Mammary epithelial cell (primary cell): ENCODE measurements at regions of chr6 and their contacts with region 1.

Region 1: DNA sequence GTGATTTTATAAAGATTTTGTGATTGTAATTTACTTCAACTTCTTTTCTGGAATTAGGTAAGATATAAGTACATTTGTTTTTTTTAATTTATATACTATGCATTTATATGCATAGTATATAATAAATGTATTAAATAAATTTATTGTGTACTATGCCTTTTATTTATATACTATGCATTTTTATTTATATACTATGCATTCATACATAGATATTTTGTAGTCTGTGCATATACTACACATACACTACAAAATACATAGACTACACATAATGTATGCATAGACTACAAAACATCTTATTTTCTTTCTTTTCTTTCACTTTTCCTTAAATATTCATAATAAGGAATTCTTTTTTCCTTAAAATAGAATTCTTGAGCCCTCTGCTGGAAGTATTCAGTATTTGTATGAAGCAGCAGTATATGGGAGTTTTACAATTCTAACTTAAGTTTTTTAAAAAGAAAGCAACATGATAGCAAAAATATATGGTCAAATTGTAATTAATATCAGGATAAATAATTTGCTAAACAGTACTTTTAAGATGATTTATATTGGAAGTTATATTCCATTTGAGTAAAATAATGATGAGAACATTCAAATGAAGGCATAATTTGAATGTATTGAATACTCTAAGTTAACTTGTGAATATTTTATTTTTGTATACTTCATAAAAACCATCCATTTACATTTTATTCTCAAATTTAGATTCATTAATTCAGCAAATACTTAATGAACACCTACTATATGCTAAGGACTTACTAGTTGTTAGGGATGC is 129.3 kb downstream of the KLHL32 start:
- DNase-seq: no peak
- H3K4me3 ChIP-seq: no peak overlapping the region
- H3K27ac ChIP-seq: no peak overlapping the region
- H3K4me1 ChIP-seq: peaks cover 7% of the 10 kb centered on the region
- H3K27me3 ChIP-seq: peaks cover 4% of the 10 kb centered on the region
- CTCF ChIP-seq: peak; percentile 38 to 50

Region 2: GRCh38 chr6:96626759-96627364 is 427.0 kb before region 1 on chr6:
- CTCF ChIA-PET with region 1: no interaction called
- dilution Hi-C with region 1: no loop called
- in situ Hi-C with region 1: loop called (anchors 5 kb)
- intact Hi-C with region 1: loop called (anchors 1 kb)
- DNase-seq: peak; percentile 1
- H3K4me3 ChIP-seq: no peak overlapping the region
- H3K27ac ChIP-seq: no peak overlapping the region
- H3K4me1 ChIP-seq: no peaks in the 10 kb centered on the region
- H3K27me3 ChIP-seq: peaks cover 4% of the 10 kb centered on the region
- CTCF ChIP-seq: peak; percentile 7 to 40

Region 3: GRCh38 chr6:96837081-96837971 is 216.5 kb before region 1 on chr6 and contains the start of gene GPR63:
- CTCF ChIA-PET with region 1: no interaction called
- dilution Hi-C with region 1: no loop called
- in situ Hi-C with region 1: no loop called
- intact Hi-C with region 1: loop called (anchors 5 kb)
- DNase-seq: peak; percentile 90
- H3K4me3 ChIP-seq: peak within 1 kb of the TSS; percentile 62 to 89 (median 78)
- H3K27ac ChIP-seq: peak within 1 kb of the TSS; percentile 37
- H3K4me1 ChIP-seq: no peaks in the 10 kb centered on the region
- H3K27me3 ChIP-seq: no peaks in the 10 kb centered on the region
- CTCF ChIP-seq: no peak
- total RNA-seq, gene GPR63: 1.2 to 2.7 TPM